Mammary epithelial cell (primary cell): ENCODE measurements at regions of chr11 and their contacts with region 1.

Region 1: GRCh38 chr11:37504060-37504611 is 906.1 kb upstream of the RAG2 start:
- DNase-seq: peak; percentile 98
- H3K4me3 ChIP-seq: peak overlapping the region in 2 of 3 experiments; percentile 17 to 23
- H3K27ac ChIP-seq: peak overlapping the region; percentile 99
- H3K4me1 ChIP-seq: peaks cover 51% of the 10 kb centered on the region
- H3K27me3 ChIP-seq: no peaks in the 10 kb centered on the region
- CTCF ChIP-seq: no peak

Region 2: DNA sequence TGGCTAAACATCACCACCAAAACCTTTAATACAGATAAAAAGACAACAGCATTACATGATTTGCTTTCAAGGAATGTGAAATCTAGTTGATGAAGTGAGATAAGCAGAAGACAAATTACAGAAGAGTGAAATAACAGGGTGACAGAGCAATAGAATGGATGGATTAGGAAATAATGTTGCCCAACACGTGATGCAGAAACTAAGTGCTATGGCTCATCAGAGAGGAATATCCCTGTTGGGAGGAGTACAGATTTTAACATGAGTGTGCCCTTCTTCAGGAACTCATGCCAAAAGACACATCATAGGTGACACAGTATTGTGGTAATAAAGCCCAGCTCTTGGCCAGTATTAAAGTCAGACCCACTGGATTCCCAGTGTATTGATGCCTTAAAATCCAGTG is 729.5 kb before region 1 on chr11:
- CTCF ChIA-PET with region 1: no interaction called
- dilution Hi-C with region 1: no loop called
- in situ Hi-C with region 1: no loop called
- intact Hi-C with region 1: loop called (anchors 10 kb)
- DNase-seq: peak; percentile 92
- H3K4me3 ChIP-seq: no peak overlapping the region
- H3K27ac ChIP-seq: peak overlapping the region; percentile 63
- H3K4me1 ChIP-seq: peaks cover 15% of the 10 kb centered on the region
- H3K27me3 ChIP-seq: peaks cover under 1% of the 10 kb centered on the region
- CTCF ChIP-seq: no peak

Region 3: DNA sequence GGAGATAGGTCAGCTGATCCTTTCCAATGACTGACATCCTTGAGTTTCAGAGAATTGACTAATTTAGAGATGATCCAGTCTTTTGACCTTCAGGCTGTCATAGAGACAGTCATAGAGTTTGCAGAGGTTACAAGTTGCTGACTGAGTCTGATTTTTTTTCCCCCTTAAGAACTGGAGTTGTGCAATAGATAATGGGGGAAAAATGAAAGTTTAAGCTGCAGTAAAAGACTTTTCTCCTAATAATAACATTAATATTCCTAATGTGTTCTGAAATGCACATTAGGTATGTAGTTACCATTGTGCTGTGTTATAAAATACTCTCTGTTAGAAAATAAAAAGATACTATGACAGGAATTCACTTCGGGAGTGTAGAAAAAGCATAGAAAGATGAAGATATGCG is 29.2 kb before region 1 on chr11:
- CTCF ChIA-PET with region 1: no interaction called
- dilution Hi-C with region 1: no loop called
- in situ Hi-C with region 1: no loop called
- intact Hi-C with region 1: loop called (anchors 2 kb)
- DNase-seq: no peak
- H3K4me3 ChIP-seq: peak overlapping the region in 1 of 3 experiments; percentile 17
- H3K27ac ChIP-seq: no peak overlapping the region
- H3K4me1 ChIP-seq: no peaks in the 10 kb centered on the region
- H3K27me3 ChIP-seq: no peaks in the 10 kb centered on the region
- CTCF ChIP-seq: no peak

Region 4: DNA sequence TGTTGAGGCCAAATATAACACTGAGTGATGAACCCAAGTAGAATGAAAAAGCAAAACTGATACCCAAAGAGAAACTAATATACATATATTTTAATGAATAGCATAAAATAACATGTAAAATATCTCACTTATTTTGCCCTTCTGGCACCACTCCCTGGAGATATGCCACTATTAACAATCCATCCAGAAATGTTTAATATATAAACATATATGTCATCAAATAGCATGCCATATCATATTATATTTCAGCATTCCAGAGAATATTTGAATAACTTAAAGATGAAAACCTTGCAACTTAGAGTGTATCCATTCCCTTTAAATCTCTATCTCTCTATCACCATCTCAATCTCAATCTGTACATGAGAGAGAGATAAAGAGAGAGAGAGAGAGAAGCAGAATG is 167.2 kb after region 1 on chr11:
- CTCF ChIA-PET with region 1: no interaction called
- dilution Hi-C with region 1: no loop called
- in situ Hi-C with region 1: no loop called
- intact Hi-C with region 1: no loop called
- DNase-seq: no peak
- H3K4me3 ChIP-seq: no peak overlapping the region
- H3K27ac ChIP-seq: no peak overlapping the region
- H3K4me1 ChIP-seq: no peaks in the 10 kb centered on the region
- H3K27me3 ChIP-seq: no peaks in the 10 kb centered on the region
- CTCF ChIP-seq: no peak

Region 5: DNA sequence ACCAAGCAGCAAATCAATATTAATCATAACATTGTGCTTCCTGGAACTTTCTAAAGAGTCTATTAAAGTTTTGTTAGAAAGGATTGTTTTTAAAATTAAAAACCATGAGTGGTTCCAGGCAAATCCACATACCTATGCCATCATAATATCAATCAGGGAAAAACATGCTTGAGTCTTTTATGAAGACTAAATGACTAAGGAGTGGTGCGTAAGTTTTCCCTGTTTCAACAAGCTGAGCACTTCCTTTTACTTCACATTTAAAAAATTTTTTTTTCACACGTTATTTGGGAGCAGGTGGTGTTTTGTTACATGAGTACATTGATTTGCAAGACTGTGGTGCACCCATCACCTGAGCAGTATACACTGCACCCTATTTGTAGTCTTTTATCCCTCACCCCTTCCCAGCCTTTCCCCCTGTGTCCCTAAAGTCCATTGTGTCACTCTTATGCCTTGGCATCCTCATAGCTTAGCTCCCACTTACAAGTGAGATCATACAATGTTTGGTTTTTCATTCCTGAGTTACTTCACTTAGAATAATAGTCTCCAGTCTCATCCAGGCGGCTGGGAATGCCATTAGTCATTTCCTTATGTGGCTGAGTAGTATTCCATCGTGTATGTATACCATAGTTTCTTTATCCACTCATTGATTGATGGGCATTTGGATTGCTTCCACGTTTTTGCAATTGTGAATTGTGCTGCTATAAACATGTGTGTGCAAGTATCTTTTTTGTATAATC is 284.2 kb after region 1 on chr11:
- CTCF ChIA-PET with region 1: no interaction called
- dilution Hi-C with region 1: no loop called
- in situ Hi-C with region 1: no loop called
- intact Hi-C with region 1: loop called (anchors 5 kb)
- DNase-seq: peak; percentile 96
- H3K4me3 ChIP-seq: peak overlapping the region in 1 of 3 experiments; percentile 9
- H3K27ac ChIP-seq: peak overlapping the region; percentile 98
- H3K4me1 ChIP-seq: peaks cover 24% of the 10 kb centered on the region
- H3K27me3 ChIP-seq: no peaks in the 10 kb centered on the region
- CTCF ChIP-seq: no peak